ENCODE measurements at regions of chr6 and their contacts with region 1.

Region 1: GRCh38 chr6:29649701-29650673 is 6.9 kb upstream of the MOG start:
- DNase-seq: peak; percentile 69
- H3K4me3 ChIP-seq: peak overlapping the region; percentile 59
- CTCF ChIP-seq: peak; percentile 88

Region 2: DNA sequence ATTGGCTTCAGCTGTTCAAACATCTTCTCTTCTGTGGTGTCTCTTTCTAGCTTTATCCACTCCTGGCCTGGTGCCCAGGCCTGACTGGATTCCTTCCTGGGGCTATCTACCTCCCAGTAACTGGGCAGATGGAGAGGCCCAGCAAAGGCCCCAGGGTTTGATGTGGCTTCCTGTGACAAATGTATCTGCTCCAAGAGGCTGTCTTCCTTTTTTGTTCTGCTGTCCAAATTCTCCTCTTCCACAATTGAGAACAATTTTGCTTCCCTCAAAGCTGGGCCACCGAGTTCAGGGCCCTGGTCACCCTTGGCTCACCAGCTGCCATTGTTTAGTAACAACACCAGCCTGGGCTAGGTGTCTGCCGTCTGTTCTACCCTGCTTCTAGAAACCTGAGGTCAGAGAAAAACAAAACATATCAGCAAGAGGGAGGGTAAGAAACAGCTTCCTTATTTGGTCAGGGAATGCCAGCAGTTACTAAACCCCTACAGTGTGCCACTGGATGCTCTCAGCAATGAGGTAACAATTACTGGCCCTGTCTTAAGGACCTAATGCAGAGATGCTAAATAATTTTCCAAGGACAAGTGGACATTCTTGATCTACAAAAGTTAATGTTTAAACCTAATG is 27.1 kb after region 1 on chr6:
- CTCF ChIA-PET with region 1: interaction called, 109 read pairs
- POLR2A ChIA-PET with region 1: no interaction called
- DNase-seq: no peak
- H3K4me3 ChIP-seq: no peak overlapping the region
- CTCF ChIP-seq: no peak

Region 3: GRCh38 chr6:29705389-29706231 is 55.6 kb after region 1 on chr6:
- CTCF ChIA-PET with region 1: interaction called, 16 read pairs
- POLR2A ChIA-PET with region 1: no interaction called
- DNase-seq: peak; percentile 10
- H3K4me3 ChIP-seq: no peak overlapping the region
- CTCF ChIP-seq: peak; percentile 54

Region 4: DNA sequence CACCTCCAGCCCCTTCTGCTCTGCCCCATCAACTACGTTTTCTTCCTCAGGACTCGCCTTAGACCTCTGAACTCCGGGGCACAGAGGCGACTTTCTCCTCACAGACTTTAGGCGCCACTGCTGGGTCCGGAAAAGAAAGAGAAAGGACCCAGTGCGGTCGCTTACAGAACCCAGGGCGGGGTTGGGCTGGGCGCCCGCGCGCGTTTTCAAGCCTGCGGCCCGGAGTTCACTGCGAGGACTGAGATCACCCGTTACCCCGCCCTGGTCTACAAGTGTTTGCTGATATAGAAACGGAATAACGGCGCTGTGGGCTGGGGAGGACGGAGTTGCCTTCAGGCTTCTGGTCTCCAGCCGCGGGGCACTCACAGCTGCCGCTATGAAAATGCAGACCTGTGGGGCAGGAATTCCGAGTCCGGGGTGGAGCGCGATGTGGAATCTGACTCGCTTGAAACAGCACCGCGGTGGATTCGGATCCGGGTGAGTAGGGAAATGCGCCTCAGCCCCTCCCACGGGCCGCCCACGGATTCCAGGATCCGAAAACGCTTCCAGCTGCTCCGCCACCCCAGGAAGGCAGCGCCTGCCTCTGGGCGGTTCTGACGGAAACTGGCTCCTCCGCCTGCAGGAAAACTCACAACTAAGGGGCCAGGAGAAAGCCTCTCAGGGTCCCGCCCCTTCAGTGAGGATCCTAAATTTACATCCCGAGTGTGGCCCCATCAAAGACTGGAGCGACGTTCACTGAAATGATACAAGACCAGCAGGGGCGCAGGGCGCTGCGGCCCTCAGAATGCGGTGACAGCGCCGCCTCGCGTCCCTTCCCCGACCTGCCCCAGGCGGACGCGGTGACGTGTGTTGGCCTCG is 102.7 kb after region 1 on chr6:
- CTCF ChIA-PET with region 1: interaction called, 17 read pairs
- POLR2A ChIA-PET with region 1: no interaction called
- DNase-seq: peak; percentile 40
- H3K4me3 ChIP-seq: peak overlapping the region; percentile 73
- CTCF ChIP-seq: peak; percentile 100

Region 5: GRCh38 chr6:29834564-29835436 is 184.8 kb after region 1 on chr6:
- CTCF ChIA-PET with region 1: interaction called, 13 read pairs
- POLR2A ChIA-PET with region 1: no interaction called
- DNase-seq: no peak
- H3K4me3 ChIP-seq: no peak overlapping the region
- CTCF ChIP-seq: peak; percentile 73

Region 6: GRCh38 chr6:29909985-29910384 is 260.0 kb after region 1 on chr6:
- CTCF ChIA-PET with region 1: no interaction called
- POLR2A ChIA-PET with region 1: no interaction called
- DNase-seq: no peak
- H3K4me3 ChIP-seq: no peak overlapping the region
- CTCF ChIP-seq: no peak

Measured in AG04449 (cell line).